Cardiac septum (tissue), 1 donor: ENCODE measurements at regions of chr12 and their contacts with region 1.

Region 1: GRCh38 chr12:92649511-92650227 is 53.1 kb upstream of the PLEKHG7 start:
- DNase-seq: no peak

Region 2: DNA sequence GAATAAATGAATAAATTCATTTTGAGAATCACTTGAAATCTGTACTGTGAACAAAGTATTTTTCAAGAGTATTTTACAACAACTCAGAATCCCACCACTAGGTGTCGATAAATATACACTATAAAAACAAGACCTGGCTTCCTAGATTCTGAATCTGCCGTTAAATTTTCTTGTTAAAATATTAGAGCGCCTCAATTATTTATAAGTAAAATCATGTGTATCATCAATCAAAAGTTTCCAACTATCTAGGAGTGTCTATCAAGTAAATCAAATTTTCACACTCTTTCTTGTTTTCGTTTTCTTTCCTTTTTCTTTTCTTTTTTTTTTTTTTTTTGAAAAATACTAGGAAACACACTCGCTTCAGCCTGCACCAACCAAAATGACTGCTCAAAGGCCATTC is 1287.8 kb before region 1 on chr12:
- intact Hi-C with region 1: loop called (anchors 10 kb)
- DNase-seq: no peak

Region 3: GRCh38 chr12:91804533-91804932 is 845.1 kb before region 1 on chr12:
- intact Hi-C with region 1: loop called (anchors 10 kb)
- DNase-seq: no peak

Region 4: GRCh38 chr12:92593734-92594402 is 55.8 kb before region 1 on chr12:
- intact Hi-C with region 1: no loop called
- DNase-seq: no peak

Region 5: GRCh38 chr12:93019975-93020630 is 370.4 kb after region 1 on chr12:
- intact Hi-C with region 1: no loop called
- DNase-seq: no peak